Left colon (tissue), 2 donors: ENCODE measurements at regions of chr3 and their contacts with region 1.

Region 1: DNA sequence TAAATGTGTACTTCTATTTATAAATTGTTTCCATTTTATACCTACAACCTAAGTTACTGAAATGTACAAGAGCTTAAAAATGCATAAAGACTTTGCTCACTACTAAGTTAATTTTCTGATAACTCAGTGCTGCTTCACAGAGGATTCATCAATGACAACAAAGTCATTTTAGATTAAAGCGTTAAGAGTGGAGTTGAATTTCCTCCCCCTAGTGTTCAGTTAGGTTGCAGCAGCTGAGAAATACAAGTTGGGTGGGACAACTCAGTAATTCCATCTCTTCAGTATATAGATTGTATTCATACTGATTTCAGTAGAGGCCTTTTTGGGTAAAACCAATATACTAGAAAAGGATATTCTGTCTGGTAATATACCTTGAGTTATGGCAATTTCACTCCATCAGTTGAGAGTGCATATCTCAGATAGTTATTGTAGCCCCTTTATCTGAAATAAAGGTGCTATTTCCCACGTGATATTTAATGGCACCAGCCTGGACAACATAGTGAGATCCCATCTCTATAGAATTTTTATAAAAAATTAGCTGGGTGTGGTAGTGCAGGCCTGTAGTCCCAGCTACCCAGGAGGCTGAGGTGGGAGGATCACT is 6.9 kb upstream of the RPL35A start:
- DNase-seq: no peak
- ATAC-seq: peak; percentile 60

Region 2: GRCh38 chr3:196639483-196640296 is 1303.4 kb before region 1 on chr3 and contains the start of gene NRROS:
- intact Hi-C with region 1: no loop called
- DNase-seq: peak; percentile 75 to 76
- ATAC-seq: peak; percentile 87
- total RNA-seq, gene NRROS: 1.3 to 4.0 TPM

Region 3: GRCh38 chr3:197906023-197906849 is 36.8 kb before region 1 on chr3:
- intact Hi-C with region 1: loop called in 1 of 2 experiments (anchors 5 kb)
- DNase-seq: peak; percentile 77 to 86
- ATAC-seq: peak; percentile 95

Region 4: DNA sequence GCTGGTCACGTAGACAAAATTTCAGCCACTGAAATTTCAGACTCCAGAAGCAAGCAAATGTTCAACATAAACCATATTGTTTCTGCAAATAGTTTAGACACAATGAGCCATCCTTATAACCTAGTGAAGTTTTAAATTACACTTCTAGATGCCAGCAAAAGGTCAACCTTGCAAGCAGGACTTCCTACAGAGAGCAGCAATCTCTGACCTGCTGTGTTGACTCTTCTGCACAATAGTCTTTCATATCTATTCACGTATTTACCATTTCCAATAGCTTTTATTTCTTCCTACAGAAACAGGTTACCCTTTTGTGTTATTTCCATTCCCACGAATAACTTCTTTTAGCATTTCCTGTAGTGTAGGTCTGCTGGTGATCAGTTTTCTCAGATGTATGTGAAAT is 27.5 kb after region 1 on chr3:
- intact Hi-C with region 1: no loop called
- DNase-seq: no peak
- ATAC-seq: no peak